ENCODE measurements at regions of chr2 and their contacts with region 1.

Region 1: DNA sequence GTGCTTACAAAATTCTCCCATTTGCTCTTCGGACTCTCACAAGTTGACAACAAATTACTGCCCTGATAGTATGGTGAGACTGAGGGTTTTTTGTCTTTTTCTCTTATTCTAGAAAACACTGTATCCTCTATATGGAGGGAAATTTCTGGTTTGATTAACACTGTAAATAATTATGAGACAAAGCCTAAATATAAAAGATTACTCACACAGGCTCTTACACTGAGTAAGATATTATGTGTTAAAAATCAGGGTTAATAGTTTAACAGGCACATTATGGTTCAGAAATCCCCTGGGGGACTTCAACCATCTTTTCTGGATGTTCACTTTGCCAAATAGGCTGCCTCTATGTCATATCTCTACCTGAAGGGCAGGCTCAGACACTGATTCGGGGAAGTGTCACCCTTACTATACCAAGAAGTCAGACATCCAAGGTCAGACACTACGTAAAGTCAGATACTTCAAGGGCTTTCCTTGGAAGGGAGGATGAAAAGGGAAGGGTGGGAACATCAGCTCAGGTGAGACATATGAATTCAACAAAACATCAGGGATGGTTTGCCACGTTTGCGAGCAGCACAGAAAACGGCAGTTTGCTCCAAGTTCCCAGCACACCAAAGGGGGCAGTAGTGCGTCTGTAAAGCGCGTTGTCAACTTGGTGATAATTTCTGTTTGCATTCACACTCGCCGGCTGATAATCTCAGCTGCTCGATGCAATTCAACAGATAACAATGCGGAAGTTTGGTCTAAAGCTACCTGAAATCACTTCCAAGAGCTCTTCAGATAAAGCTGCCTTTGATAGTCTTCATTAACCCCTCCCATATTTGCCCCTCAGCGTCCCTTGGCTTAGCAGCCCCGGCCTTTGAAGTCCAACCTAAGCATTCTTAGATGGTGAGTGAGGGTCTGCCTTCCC is 972 bp upstream of the RASGRP3 start:
- DNase-seq: peak; percentile 73
- CTCF ChIP-seq: peak; percentile 80

Region 2: GRCh38 chr2:33153008-33153407 is 322.5 kb before region 1 on chr2:
- CTCF ChIA-PET with region 1: no interaction called
- POLR2A ChIA-PET with region 1: no interaction called
- DNase-seq: no peak
- CTCF ChIP-seq: no peak

Region 3: DNA sequence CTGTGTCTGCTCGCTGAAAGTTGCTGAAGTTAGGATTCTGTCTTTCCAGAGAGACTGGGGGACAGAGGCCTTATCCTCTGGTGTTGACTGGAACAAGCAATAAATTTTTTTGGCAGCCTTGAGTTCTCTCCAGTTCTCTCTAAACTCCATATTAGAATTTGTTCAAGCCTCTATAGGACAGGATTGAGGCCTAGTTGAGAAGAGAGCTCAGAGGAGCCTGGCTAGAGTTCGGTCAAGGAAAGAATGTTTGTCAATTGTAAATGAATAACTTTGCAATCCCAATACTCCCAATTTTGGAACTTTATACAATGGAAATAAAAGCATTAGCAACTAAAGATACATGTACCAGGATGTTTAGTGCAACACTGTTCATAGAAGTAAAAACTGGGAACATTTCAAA is 15.7 kb before region 1 on chr2:
- CTCF ChIA-PET with region 1: interaction called, 24 read pairs
- POLR2A ChIA-PET with region 1: no interaction called
- DNase-seq: no peak
- CTCF ChIP-seq: no peak

Region 4: GRCh38 chr2:33488715-33489540 is 13.5 kb after region 1 on chr2:
- CTCF ChIA-PET with region 1: interaction called, 31 read pairs
- POLR2A ChIA-PET with region 1: interaction called, 20 read pairs
- DNase-seq: peak; percentile 45
- CTCF ChIP-seq: no peak

Region 5: GRCh38 chr2:33494155-33494779 is 18.8 kb after region 1 on chr2:
- CTCF ChIA-PET with region 1: interaction called, 27 read pairs
- POLR2A ChIA-PET with region 1: interaction called, 20 read pairs
- DNase-seq: peak; percentile 37
- CTCF ChIP-seq: no peak